Caco-2 (cell line): ENCODE measurements at regions of chr3 and their contacts with region 1.

Region 1: DNA sequence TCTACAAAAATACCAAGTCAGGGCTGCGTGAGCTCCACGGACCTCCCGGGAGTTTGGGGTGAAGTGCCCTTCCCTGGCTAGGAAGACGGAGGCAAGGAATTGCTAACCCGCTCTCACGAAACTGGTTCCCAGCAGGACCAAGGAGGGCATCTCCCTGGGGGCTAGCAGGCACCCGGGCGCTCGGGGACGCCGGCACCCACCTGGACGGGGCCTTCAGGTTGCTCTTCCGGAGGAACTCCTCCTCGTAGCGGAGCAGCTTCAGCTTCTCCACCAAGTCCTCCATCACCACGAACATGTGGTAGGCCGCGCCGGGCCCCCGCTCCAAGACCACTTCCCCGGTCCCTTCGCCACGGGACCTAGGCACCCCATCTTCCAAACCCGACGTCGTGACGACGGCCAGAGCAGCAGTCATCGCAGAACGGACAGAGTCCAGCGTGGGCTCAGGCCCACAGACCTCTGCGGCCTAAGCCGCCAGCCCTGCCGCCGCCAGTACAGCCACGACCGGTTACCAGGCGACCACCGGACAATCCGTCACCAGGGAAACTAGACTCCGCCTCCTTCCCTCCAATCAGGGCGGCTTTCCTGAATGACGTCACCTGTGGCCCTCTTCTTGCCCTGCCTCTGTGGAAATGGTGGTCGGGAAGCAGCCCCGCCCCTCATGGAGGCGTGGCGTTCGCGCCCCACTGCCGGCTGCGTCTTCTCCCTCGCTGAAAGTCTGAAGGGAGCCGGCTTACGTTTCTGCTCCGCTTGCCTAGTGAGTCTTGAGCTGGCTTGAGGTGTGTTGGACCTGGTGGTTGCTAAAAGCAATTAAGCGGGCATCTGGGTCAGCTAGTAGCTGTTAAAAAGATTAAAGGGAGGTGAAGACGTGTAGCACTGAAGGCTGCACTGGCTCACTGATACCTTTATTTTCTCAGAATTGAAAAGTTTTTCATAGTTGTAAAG is at the start of gene IFT57:
- DNase-seq: peak; percentile 95 to 96
- H3K4me3 ChIP-seq: peak within 1 kb of the TSS; percentile 43
- H3K4me3 Mint-ChIP-seq: peak within 1 kb of the TSS; percentile 99
- H3K27ac Mint-ChIP-seq: peak within 1 kb of the TSS; percentile 100
- H3K4me1 ChIP-seq: peaks cover 5% of the 10 kb centered on the region; the same call in 1 of the 2 replicates
- H3K4me1 Mint-ChIP-seq: peaks cover 11% of the 10 kb centered on the region
- H3K27me3 ChIP-seq: no peaks in the 10 kb centered on the region
- H3K27me3 Mint-ChIP-seq: no peaks in the 10 kb centered on the region
- CTCF ChIP-seq: no peak
- total RNA-seq, gene IFT57: 17.6 and 19.4 TPM in 2 replicates

Region 2: GRCh38 chr3:108006077-108006771 is 216.0 kb before region 1 on chr3:
- CTCF ChIA-PET with region 1: no interaction called
- POLR2A ChIA-PET with region 1: no interaction called
- intact Hi-C with region 1: loop called (anchors 5 kb)
- DNase-seq: peak; percentile 45 to 65
- H3K4me3 ChIP-seq: no peak overlapping the region
- H3K4me3 Mint-ChIP-seq: no peak overlapping the region
- H3K27ac Mint-ChIP-seq: no peak overlapping the region
- H3K4me1 ChIP-seq: peaks cover 9% of the 10 kb centered on the region; the same call in 1 of the 2 replicates
- H3K4me1 Mint-ChIP-seq: peaks cover 17% of the 10 kb centered on the region
- H3K27me3 ChIP-seq: no peaks in the 10 kb centered on the region
- H3K27me3 Mint-ChIP-seq: peaks cover 5% of the 10 kb centered on the region
- CTCF ChIP-seq: no peak

Region 3: GRCh38 chr3:108189440-108189839 is 32.7 kb before region 1 on chr3:
- CTCF ChIA-PET with region 1: no interaction called
- POLR2A ChIA-PET with region 1: no interaction called
- intact Hi-C with region 1: loop called (anchors 1 kb)
- DNase-seq: peak; percentile 12 to 31
- H3K4me3 ChIP-seq: no peak overlapping the region
- H3K4me3 Mint-ChIP-seq: no peak overlapping the region
- H3K27ac Mint-ChIP-seq: peak overlapping the region; percentile 54
- H3K4me1 ChIP-seq: peaks cover 23% of the 10 kb centered on the region
- H3K4me1 Mint-ChIP-seq: peaks cover 10% of the 10 kb centered on the region
- H3K27me3 ChIP-seq: no peaks in the 10 kb centered on the region
- H3K27me3 Mint-ChIP-seq: no peaks in the 10 kb centered on the region
- CTCF ChIP-seq: peak; percentile 9 to 13

Region 4: DNA sequence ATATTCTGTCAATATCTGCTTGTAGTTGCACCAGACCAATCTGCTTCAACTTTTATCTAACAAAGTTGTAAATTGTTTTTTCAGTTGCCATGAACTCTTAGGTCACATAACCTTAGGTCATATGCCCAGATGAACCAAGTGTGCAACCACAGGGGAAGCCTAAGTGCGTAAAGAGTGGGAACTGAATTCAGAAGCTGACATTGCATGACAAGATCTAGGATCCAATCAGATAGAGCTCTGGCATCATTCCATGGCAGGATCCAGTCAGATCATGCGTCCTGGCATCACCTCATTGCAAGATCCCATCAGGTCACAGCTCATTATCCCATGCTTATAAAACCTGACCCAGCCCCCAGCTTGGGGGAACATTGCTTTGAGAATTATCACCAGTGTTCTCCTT is 19.0 kb after region 1 on chr3:
- CTCF ChIA-PET with region 1: no interaction called
- POLR2A ChIA-PET with region 1: interaction called, 3 read pairs
- intact Hi-C with region 1: loop called (anchors 1 kb)
- DNase-seq: no peak
- H3K4me3 ChIP-seq: no peak overlapping the region
- H3K4me3 Mint-ChIP-seq: no peak overlapping the region
- H3K27ac Mint-ChIP-seq: peak overlapping the region; percentile 44
- H3K4me1 ChIP-seq: peaks cover 44% of the 10 kb centered on the region
- H3K4me1 Mint-ChIP-seq: peaks cover 9% of the 10 kb centered on the region
- H3K27me3 ChIP-seq: no peaks in the 10 kb centered on the region
- H3K27me3 Mint-ChIP-seq: no peaks in the 10 kb centered on the region
- CTCF ChIP-seq: no peak

Region 5: GRCh38 chr3:108297647-108298046 is 75.5 kb after region 1 on chr3:
- CTCF ChIA-PET with region 1: no interaction called
- POLR2A ChIA-PET with region 1: no interaction called
- intact Hi-C with region 1: loop called (anchors 2 kb)
- DNase-seq: no peak
- H3K4me3 ChIP-seq: no peak overlapping the region
- H3K4me3 Mint-ChIP-seq: no peak overlapping the region
- H3K27ac Mint-ChIP-seq: no peak overlapping the region
- H3K4me1 ChIP-seq: peaks cover 47% of the 10 kb centered on the region
- H3K4me1 Mint-ChIP-seq: peaks cover 16% of the 10 kb centered on the region
- H3K27me3 ChIP-seq: no peaks in the 10 kb centered on the region
- H3K27me3 Mint-ChIP-seq: no peaks in the 10 kb centered on the region
- CTCF ChIP-seq: no peak

Region 6: DNA sequence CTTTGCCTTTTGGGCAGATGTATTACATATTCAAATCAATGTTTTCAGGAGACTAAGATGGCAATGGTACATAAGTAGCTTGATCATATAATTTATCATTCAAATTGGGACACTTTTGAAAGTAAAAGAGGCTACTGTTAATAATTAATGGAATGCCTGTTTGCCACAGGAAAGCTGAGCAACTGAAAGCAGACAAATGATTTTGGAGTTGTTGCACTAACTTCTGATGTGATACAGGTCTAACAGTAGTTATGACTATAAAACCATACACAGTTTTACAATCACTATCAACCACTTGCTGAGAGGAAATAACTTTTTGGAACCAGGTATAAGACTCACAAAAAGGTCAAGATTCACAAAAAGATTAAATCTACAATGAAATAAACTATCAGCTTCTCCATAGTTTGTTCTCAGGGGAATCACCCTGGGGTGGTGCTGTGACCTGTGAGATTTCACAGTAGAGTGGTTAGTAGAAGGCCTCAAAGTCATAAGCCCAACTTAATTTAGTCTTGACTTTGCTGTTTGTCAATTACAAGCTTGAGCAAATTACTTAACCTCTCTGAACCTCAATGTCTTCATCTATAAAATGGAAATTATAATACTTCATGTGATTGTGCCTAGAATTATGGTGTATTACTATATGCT is 116.8 kb after region 1 on chr3:
- CTCF ChIA-PET with region 1: no interaction called
- POLR2A ChIA-PET with region 1: no interaction called
- intact Hi-C with region 1: no loop called
- DNase-seq: no peak
- H3K4me3 ChIP-seq: no peak overlapping the region
- H3K4me3 Mint-ChIP-seq: no peak overlapping the region
- H3K27ac Mint-ChIP-seq: no peak overlapping the region
- H3K4me1 ChIP-seq: no peaks in the 10 kb centered on the region; the same call in 1 of the 2 replicates
- H3K4me1 Mint-ChIP-seq: no peaks in the 10 kb centered on the region
- H3K27me3 ChIP-seq: no peaks in the 10 kb centered on the region
- H3K27me3 Mint-ChIP-seq: no peaks in the 10 kb centered on the region
- CTCF ChIP-seq: no peak